ENCODE measurements at regions of chrX and their contacts with region 1.

Region 1: DNA sequence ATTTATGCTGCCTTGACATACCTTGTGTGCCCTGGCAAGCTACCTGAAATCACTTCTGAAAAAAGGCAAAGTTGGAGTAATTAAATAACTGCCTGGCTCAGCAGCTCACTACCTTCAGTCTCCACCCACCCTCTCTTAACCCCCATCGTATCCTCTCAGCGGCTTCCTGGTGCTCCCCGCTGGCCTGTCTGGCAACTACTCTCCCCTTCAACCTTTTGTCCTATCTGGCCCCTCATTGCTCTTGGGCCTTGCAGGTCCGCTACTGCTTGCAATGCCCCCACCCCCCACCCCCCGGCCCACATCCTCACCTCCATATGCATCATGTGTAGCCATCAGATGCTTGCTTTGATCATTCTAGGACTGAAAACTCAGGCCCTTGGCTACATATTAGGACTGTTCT is 34.5 kb downstream of the PRPS1 start:
- DNase-seq: no peak
- H3K4me3 ChIP-seq: no peak overlapping the region
- H3K4me3 Mint-ChIP-seq: no peak overlapping the region
- H3K27ac ChIP-seq: no peak overlapping the region
- H3K27ac Mint-ChIP-seq: no peak overlapping the region
- H3K4me1 ChIP-seq: no peaks in the 10 kb centered on the region
- H3K4me1 Mint-ChIP-seq: peaks cover 4 to 11% (median 8%) of the 10 kb centered on the region in 4 donors
- H3K27me3 ChIP-seq: no peaks in the 10 kb centered on the region
- H3K27me3 Mint-ChIP-seq: no peaks in the 10 kb centered on the region

Region 2: DNA sequence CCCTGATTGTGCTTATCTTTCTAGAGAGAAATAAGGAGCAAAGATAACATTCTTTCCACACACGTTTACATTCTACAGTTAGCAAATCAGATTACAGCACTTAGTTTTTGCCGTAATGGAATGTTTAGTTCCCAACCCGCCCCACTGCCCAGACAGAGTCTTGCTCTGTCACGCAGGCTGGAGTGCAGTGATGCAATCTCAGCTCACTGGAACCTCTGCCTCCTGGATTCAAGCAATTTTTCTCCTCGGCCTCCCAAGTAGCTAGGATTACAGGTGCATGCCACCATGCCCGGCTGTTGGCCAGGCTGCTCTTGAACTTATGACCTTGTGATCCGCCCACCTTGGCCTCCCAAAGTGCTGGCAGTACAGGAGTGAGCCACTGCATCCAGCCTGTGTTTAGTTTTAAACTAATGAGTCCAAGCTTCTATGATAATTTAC is 42.9 kb before region 1 on chrX:
- CTCF ChIA-PET with region 1: no interaction called
- POLR2A ChIA-PET with region 1: no interaction called
- intact Hi-C with region 1: no loop called
- DNase-seq: no peak
- H3K4me3 ChIP-seq: no peak overlapping the region
- H3K4me3 Mint-ChIP-seq: no peak overlapping the region
- H3K27ac ChIP-seq: no peak overlapping the region
- H3K27ac Mint-ChIP-seq: no peak overlapping the region
- H3K4me1 ChIP-seq: no peaks in the 10 kb centered on the region
- H3K4me1 Mint-ChIP-seq: no peaks in the 10 kb centered on the region
- H3K27me3 ChIP-seq: no peaks in the 10 kb centered on the region
- H3K27me3 Mint-ChIP-seq: no peaks in the 10 kb centered on the region

Region 3: DNA sequence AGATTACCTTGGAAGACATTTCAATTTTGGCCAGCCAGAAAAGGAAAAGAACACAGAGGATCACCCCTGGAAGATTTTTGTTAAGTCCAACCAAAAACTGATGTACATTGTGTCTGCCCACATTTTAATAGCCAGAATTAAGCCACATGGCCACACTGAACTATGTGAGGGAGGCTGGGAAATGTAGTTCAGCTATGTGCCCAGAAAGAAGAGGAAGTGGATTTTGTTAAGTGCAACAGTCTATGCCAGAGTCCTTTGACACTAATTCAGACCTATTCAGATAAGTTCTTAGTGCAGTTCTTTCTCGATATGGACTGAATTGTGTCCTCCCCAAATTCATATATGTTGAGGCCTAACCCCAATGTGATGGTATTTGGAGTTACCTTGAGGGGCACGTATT is 16.1 kb before region 1 on chrX:
- CTCF ChIA-PET with region 1: interaction called, 110 read pairs
- POLR2A ChIA-PET with region 1: no interaction called
- intact Hi-C with region 1: no loop called
- DNase-seq: no peak
- H3K4me3 ChIP-seq: no peak overlapping the region
- H3K4me3 Mint-ChIP-seq: no peak overlapping the region
- H3K27ac ChIP-seq: no peak overlapping the region
- H3K27ac Mint-ChIP-seq: peak overlapping the region in 1 of 7 donors; percentile 18
- H3K4me1 ChIP-seq: no peaks in the 10 kb centered on the region
- H3K4me1 Mint-ChIP-seq: peaks cover 0 to 4% (median 0%) of the 10 kb centered on the region in 4 donors
- H3K27me3 ChIP-seq: no peaks in the 10 kb centered on the region
- H3K27me3 Mint-ChIP-seq: no peaks in the 10 kb centered on the region

Region 4: GRCh38 chrX:107861056-107861455 is 198.2 kb after region 1 on chrX:
- CTCF ChIA-PET with region 1: no interaction called
- POLR2A ChIA-PET with region 1: no interaction called
- intact Hi-C with region 1: no loop called
- DNase-seq: no peak
- H3K4me3 ChIP-seq: no peak overlapping the region
- H3K4me3 Mint-ChIP-seq: no peak overlapping the region
- H3K27ac ChIP-seq: no peak overlapping the region
- H3K27ac Mint-ChIP-seq: peak overlapping the region in 1 of 7 donors; percentile 62
- H3K4me1 ChIP-seq: no peaks in the 10 kb centered on the region
- H3K4me1 Mint-ChIP-seq: peaks cover 0 to 7% (median 6%) of the 10 kb centered on the region in 4 donors
- H3K27me3 ChIP-seq: no peaks in the 10 kb centered on the region
- H3K27me3 Mint-ChIP-seq: no peaks in the 10 kb centered on the region

Measured in CD4-positive, alpha-beta memory T cell (primary cell).